Ascending aorta (tissue), 2 donors: ENCODE measurements at regions of chr17 and their contacts with region 1.

Region 1: GRCh38 chr17:45148183-45149036 is at the start of gene HEXIM1:
- DNase-seq: peak; percentile 98 to 100
- H3K4me3 ChIP-seq: peak within 1 kb of the TSS; percentile 73 to 90
- H3K27ac ChIP-seq: peak within 1 kb of the TSS; percentile 96 to 97
- H3K4me1 ChIP-seq: peaks cover 11 to 47% of the 10 kb centered on the region in 2 donors
- H3K27me3 ChIP-seq: no peaks in the 10 kb centered on the region
- CTCF ChIP-seq: no peak
- total RNA-seq, gene HEXIM1: 23.7 TPM

Region 2: GRCh38 chr17:43900183-43900857 is 1248.1 kb before region 1 on chr17:
- intact Hi-C with region 1: loop called (anchors 10 kb)
- DNase-seq: peak in 1 of 2 donors; percentile 90
- H3K4me3 ChIP-seq: peak overlapping the region; percentile 47 to 63
- H3K27ac ChIP-seq: no peak overlapping the region
- H3K4me1 ChIP-seq: peaks cover 7 to 14% of the 10 kb centered on the region in 2 donors
- H3K27me3 ChIP-seq: no peaks in the 10 kb centered on the region
- CTCF ChIP-seq: no peak

Region 3: GRCh38 chr17:45161019-45161825 is 12.8 kb after region 1 on chr17:
- intact Hi-C with region 1: loop called (anchors 1 kb)
- DNase-seq: peak; percentile 98 to 100
- H3K4me3 ChIP-seq: peak overlapping the region; percentile 81 to 90
- H3K27ac ChIP-seq: peak overlapping the region; percentile 98 to 100
- H3K4me1 ChIP-seq: peaks cover 12 to 42% of the 10 kb centered on the region in 2 donors
- H3K27me3 ChIP-seq: no peaks in the 10 kb centered on the region
- CTCF ChIP-seq: peak in 1 of 3 experiments; percentile 34

Region 4: GRCh38 chr17:45172454-45173286 is 24.3 kb after region 1 on chr17:
- intact Hi-C with region 1: loop called (anchors 1 kb)
- DNase-seq: peak; percentile 29 to 93
- H3K4me3 ChIP-seq: peak overlapping the region; percentile 59 to 68
- H3K27ac ChIP-seq: peak overlapping the region; percentile 95
- H3K4me1 ChIP-seq: peaks cover 3 to 28% of the 10 kb centered on the region in 2 donors
- H3K27me3 ChIP-seq: no peaks in the 10 kb centered on the region
- CTCF ChIP-seq: peak in 1 of 3 experiments; percentile 2

Region 5: GRCh38 chr17:45197555-45198334 is 49.3 kb after region 1 on chr17:
- intact Hi-C with region 1: loop called (anchors 1 kb)
- DNase-seq: peak; percentile 55 to 96
- H3K4me3 ChIP-seq: peak overlapping the region in 1 of 2 donors; percentile 38
- H3K27ac ChIP-seq: peak overlapping the region in 1 of 2 donors; percentile 26
- H3K4me1 ChIP-seq: peaks cover 0 to 4% of the 10 kb centered on the region in 2 donors
- H3K27me3 ChIP-seq: no peaks in the 10 kb centered on the region
- CTCF ChIP-seq: peak; percentile 99 to 100 (median 99)